AG04449 (cell line): ENCODE measurements at regions of chr10 and their contacts with region 1.

Region 1: GRCh38 chr10:78013564-78013963 is 15.8 kb downstream of the POLR3A start:
- DNase-seq: no peak
- H3K4me3 ChIP-seq: no peak overlapping the region
- CTCF ChIP-seq: no peak

Region 2: GRCh38 chr10:78029269-78030226 is 16.0 kb after region 1 on chr10 and contains the start of gene POLR3A:
- CTCF ChIA-PET with region 1: interaction called, 11 read pairs
- POLR2A ChIA-PET with region 1: no interaction called
- DNase-seq: peak; percentile 95
- H3K4me3 ChIP-seq: peak within 1 kb of the TSS; percentile 100
- CTCF ChIP-seq: peak; percentile 54